ENCODE measurements at regions of chr17 and their contacts with region 1.

Region 1: GRCh38 chr17:44218344-44219107 is 949 bp downstream of the UBTF start:
- DNase-seq: peak; percentile 77 to 96 (median 88)
- ATAC-seq: peak; percentile 41
- H3K4me3 ChIP-seq: peak overlapping the region; percentile 71
- H3K4me3 Mint-ChIP-seq: peak overlapping the region; percentile 84
- H3K27ac ChIP-seq: peak overlapping the region; percentile 62 to 66
- H3K27ac Mint-ChIP-seq: peak overlapping the region; percentile 86
- H3K4me1 ChIP-seq: peaks cover 64% of the 10 kb centered on the region
- H3K4me1 Mint-ChIP-seq: peaks cover 58% of the 10 kb centered on the region
- H3K27me3 ChIP-seq: no peaks in the 10 kb centered on the region
- H3K27me3 Mint-ChIP-seq: no peaks in the 10 kb centered on the region
- CTCF ChIP-seq: peak; percentile 76

Region 2: DNA sequence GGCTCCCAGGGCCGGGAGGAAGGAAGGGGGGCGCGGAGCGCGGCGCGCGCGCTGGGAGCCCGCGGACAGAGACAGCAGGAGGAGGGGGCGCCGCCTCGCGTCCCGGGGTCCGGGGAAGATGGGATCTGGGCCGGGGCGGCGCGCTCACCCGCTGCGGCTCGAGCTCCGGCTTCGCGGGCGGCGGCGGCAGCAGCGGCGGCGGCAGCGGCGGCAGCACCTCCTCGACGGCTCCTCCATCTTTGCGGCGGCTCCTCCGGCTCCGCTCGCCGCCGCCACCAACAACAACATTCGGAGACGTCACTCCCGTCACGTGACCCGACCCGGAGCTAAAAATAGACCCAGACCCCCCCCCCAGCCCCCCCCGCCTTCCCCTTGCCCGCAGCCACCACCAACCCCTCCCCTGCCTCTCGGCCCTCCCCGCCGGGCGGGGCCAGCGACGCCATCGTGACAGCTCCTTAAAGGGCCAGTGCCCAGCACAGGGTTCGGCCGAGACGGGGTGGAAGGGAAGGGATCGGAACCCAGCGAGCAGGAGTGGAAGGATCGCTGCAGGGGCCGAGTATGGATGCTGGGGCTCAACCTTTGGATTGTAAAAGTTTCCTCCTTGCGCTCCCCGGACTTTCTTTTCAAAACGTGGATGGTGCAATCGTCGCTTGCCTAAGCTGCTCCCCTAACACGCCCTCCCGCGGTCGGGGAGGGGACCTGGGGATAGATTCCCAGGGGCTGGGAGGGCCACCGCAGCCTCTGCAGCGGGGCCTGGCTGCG is 95.0 kb before region 1 on chr17 and contains the start of gene HDAC5:
- CTCF ChIA-PET with region 1: interaction called, 7 read pairs
- POLR2A ChIA-PET with region 1: interaction called, 35 read pairs
- intact Hi-C with region 1: no loop called
- DNase-seq: peak; percentile 93 to 99 (median 96)
- ATAC-seq: peak; percentile 94
- H3K4me3 ChIP-seq: peak within 1 kb of the TSS; percentile 73
- H3K4me3 Mint-ChIP-seq: peak within 1 kb of the TSS; percentile 99
- H3K27ac ChIP-seq: peak within 1 kb of the TSS; percentile 57 to 83
- H3K27ac Mint-ChIP-seq: peak within 1 kb of the TSS; percentile 99
- H3K4me1 ChIP-seq: peaks cover 52% of the 10 kb centered on the region
- H3K4me1 Mint-ChIP-seq: peaks cover 47% of the 10 kb centered on the region
- H3K27me3 ChIP-seq: no peaks in the 10 kb centered on the region
- H3K27me3 Mint-ChIP-seq: no peaks in the 10 kb centered on the region
- CTCF ChIP-seq: peak; percentile 66
- total RNA-seq, gene HDAC5: 92.0 to 92.5 TPM

Region 3: GRCh38 chr17:44199553-44200477 is 18.7 kb before region 1 on chr17 and contains the start of gene ATXN7L3:
- CTCF ChIA-PET with region 1: interaction called, 11 read pairs
- POLR2A ChIA-PET with region 1: interaction called, 181 read pairs
- intact Hi-C with region 1: loop called (anchors 1 to 2 kb)
- DNase-seq: peak; percentile 99 to 100 (median 99)
- ATAC-seq: peak; percentile 80
- H3K4me3 ChIP-seq: peak within 1 kb of the TSS; percentile 94
- H3K4me3 Mint-ChIP-seq: peak within 1 kb of the TSS; percentile 93
- H3K27ac ChIP-seq: peak within 1 kb of the TSS; percentile 83 to 87
- H3K27ac Mint-ChIP-seq: peak within 1 kb of the TSS; percentile 93
- H3K4me1 ChIP-seq: peaks cover 45% of the 10 kb centered on the region
- H3K4me1 Mint-ChIP-seq: peaks cover 46% of the 10 kb centered on the region
- H3K27me3 ChIP-seq: no peaks in the 10 kb centered on the region
- H3K27me3 Mint-ChIP-seq: no peaks in the 10 kb centered on the region
- CTCF ChIP-seq: no peak
- total RNA-seq, gene ATXN7L3: 85.2 to 99.2 TPM

Region 4: GRCh38 chr17:44283344-44284024 is 65.0 kb after region 1 on chr17:
- CTCF ChIA-PET with region 1: no interaction called
- POLR2A ChIA-PET with region 1: no interaction called
- intact Hi-C with region 1: no loop called
- DNase-seq: no peak
- ATAC-seq: no peak
- H3K4me3 ChIP-seq: no peak overlapping the region
- H3K4me3 Mint-ChIP-seq: no peak overlapping the region
- H3K27ac ChIP-seq: no peak overlapping the region
- H3K27ac Mint-ChIP-seq: no peak overlapping the region
- H3K4me1 ChIP-seq: peaks cover 13% of the 10 kb centered on the region
- H3K4me1 Mint-ChIP-seq: no peaks in the 10 kb centered on the region
- H3K27me3 ChIP-seq: no peaks in the 10 kb centered on the region
- H3K27me3 Mint-ChIP-seq: peaks cover 8% of the 10 kb centered on the region
- CTCF ChIP-seq: no peak

Region 5: DNA sequence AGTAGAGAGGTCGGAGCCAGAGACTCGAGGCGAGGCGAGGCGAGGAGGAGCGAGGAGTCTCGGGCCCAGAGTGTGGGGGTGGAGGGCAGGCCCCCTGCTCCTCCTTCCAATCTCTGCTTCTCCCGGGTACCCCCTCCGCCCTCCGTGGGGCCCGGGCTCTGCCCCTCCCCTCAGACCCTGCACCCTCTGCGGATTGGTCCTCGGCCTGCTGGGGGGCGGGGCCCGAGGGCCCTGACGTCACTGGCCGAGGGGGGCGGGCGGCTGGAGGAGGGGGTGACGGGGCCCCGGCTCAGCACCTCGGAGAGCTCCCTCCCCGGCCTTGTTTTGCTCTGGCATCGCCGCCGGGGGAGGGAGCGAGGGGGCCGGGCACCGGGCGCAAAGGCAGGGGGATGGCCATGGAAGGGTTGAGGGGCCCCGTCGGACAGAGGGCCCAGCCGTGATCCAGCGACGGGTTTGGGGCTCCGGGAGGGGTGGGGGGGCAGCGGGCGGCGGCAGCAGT is 89.8 kb after region 1 on chr17 and contains the start of gene RUNDC3A:
- CTCF ChIA-PET with region 1: no interaction called
- POLR2A ChIA-PET with region 1: interaction called, 12 read pairs
- intact Hi-C with region 1: no loop called
- DNase-seq: peak; percentile 75 to 92 (median 84)
- ATAC-seq: peak; percentile 90
- H3K4me3 ChIP-seq: peak within 1 kb of the TSS; percentile 38
- H3K4me3 Mint-ChIP-seq: peak within 1 kb of the TSS; percentile 42
- H3K27ac ChIP-seq: no peak within 1 kb of the TSS
- H3K27ac Mint-ChIP-seq: no peak within 1 kb of the TSS
- H3K4me1 ChIP-seq: peaks cover 26% of the 10 kb centered on the region
- H3K4me1 Mint-ChIP-seq: peaks cover 23% of the 10 kb centered on the region
- H3K27me3 ChIP-seq: peaks cover 20 to 21% of the 10 kb centered on the region in 2 experiments
- H3K27me3 Mint-ChIP-seq: peaks cover 55% of the 10 kb centered on the region
- CTCF ChIP-seq: no peak
- total RNA-seq, gene RUNDC3A: not detected

Region 6: GRCh38 chr17:44324571-44325275 is 106.2 kb after region 1 on chr17 and contains the start of gene SLC25A39:
- CTCF ChIA-PET with region 1: interaction called, 7 read pairs
- POLR2A ChIA-PET with region 1: interaction called, 157 read pairs
- intact Hi-C with region 1: loop called in 1 of 2 experiments (anchors 2 kb)
- DNase-seq: peak; percentile 87 to 97 (median 94)
- ATAC-seq: peak; percentile 69
- H3K4me3 ChIP-seq: peak within 1 kb of the TSS; percentile 85
- H3K4me3 Mint-ChIP-seq: peak within 1 kb of the TSS; percentile 95
- H3K27ac ChIP-seq: peak within 1 kb of the TSS; percentile 83 to 90
- H3K27ac Mint-ChIP-seq: peak within 1 kb of the TSS; percentile 96
- H3K4me1 ChIP-seq: peaks cover 44% of the 10 kb centered on the region
- H3K4me1 Mint-ChIP-seq: peaks cover 27% of the 10 kb centered on the region
- H3K27me3 ChIP-seq: no peaks in the 10 kb centered on the region
- H3K27me3 Mint-ChIP-seq: no peaks in the 10 kb centered on the region
- CTCF ChIP-seq: no peak
- total RNA-seq, gene SLC25A39: 55.5 to 65.5 TPM

Region 7: DNA sequence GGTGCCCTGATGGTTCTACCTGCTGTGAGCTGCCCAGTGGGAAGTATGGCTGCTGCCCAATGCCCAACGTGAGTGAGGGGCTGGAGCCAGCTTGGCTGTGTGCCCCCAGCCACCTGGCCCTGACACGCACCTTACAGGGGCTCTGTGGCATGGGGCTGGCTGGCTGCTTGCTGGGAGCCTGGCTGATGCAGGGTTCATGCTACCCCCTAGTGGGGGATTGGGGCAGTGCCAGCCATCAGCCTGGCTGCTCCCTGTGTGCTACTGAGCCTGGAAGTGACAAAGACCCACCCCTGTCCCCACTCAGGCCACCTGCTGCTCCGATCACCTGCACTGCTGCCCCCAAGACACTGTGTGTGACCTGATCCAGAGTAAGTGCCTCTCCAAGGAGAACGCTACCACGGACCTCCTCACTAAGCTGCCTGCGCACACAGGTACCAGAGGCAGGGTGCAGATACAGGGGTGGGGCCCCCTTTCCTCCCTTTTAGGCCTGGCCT is 132.3 kb after region 1 on chr17:
- CTCF ChIA-PET with region 1: interaction called, 9 read pairs
- POLR2A ChIA-PET with region 1: interaction called, 38 read pairs
- intact Hi-C with region 1: no loop called
- DNase-seq: peak; percentile 53 to 84 (median 68)
- ATAC-seq: peak; percentile 79
- H3K4me3 ChIP-seq: no peak overlapping the region
- H3K4me3 Mint-ChIP-seq: peak overlapping the region; percentile 52
- H3K27ac ChIP-seq: no peak overlapping the region
- H3K27ac Mint-ChIP-seq: no peak overlapping the region
- H3K4me1 ChIP-seq: peaks cover 26% of the 10 kb centered on the region
- H3K4me1 Mint-ChIP-seq: peaks cover 17% of the 10 kb centered on the region
- H3K27me3 ChIP-seq: no peaks in the 10 kb centered on the region
- H3K27me3 Mint-ChIP-seq: peaks cover 4% of the 10 kb centered on the region
- CTCF ChIP-seq: peak; percentile 83